Activated naive CD4-positive, alpha-beta T cell treated with anti-CD3 and anti-CD28 coated beads for 36 hours (primary cell): ENCODE measurements at regions of chr7 and their contacts with region 1.

Region 1: DNA sequence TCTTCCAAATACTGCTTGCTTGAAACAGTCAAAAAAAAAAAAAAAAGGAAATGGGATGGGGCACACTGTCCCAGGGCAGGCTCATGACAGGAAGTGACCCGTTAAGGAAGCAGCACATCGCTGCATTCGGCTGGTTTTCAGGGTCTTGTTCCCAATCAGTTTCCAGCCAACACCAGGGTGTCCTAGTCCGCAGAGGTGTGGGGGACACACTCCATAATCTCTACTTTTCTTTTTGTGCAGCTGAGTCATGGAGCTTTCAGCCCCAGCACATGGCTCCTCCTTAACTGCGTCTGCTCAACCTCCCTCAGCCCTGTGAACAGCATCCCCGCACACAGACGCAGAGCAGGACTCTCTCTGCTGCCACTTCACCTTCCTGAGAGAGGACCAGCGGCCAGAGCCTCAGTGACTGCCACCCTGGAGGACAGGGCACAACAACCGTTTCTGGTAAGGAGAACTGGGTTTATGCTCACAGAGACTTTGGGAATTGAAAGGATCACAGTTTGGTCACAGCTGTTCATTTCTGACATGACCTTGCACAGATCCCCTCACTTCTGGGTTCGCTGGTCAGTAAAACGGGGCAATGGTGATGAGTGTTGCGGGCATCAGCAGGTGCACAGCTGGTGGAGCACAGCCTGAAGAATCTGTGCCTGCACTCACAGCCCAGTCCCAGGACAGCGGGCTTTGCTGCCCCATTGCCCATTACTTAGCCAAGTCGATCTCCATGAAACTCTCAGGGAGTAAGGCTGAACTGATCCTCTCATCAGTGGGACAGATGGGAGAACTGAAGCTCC is at the start of gene GIMAP5:
- DNase-seq: peak; percentile 66
- H3K4me3 Mint-ChIP-seq: peak within 1 kb of the TSS; percentile 88
- H3K27ac Mint-ChIP-seq: peak within 1 kb of the TSS; percentile 95
- H3K4me1 Mint-ChIP-seq: peaks cover 72% of the 10 kb centered on the region
- H3K27me3 Mint-ChIP-seq: no peaks in the 10 kb centered on the region
- total RNA-seq, gene GIMAP5: 32.1 to 32.3 TPM

Region 2: GRCh38 chr7:150631866-150632864 is 105.3 kb before region 1 on chr7 and contains the start of gene GIMAP6:
- CTCF ChIA-PET with region 1: interaction called, 4 read pairs
- intact Hi-C with region 1: loop called (anchors 1 kb)
- DNase-seq: peak; percentile 64
- H3K4me3 Mint-ChIP-seq: peak within 1 kb of the TSS; percentile 85
- H3K27ac Mint-ChIP-seq: peak within 1 kb of the TSS; percentile 92
- H3K4me1 Mint-ChIP-seq: peaks cover 67% of the 10 kb centered on the region
- H3K27me3 Mint-ChIP-seq: no peaks in the 10 kb centered on the region
- total RNA-seq, gene GIMAP6: 19.2 to 20.7 TPM

Region 3: DNA sequence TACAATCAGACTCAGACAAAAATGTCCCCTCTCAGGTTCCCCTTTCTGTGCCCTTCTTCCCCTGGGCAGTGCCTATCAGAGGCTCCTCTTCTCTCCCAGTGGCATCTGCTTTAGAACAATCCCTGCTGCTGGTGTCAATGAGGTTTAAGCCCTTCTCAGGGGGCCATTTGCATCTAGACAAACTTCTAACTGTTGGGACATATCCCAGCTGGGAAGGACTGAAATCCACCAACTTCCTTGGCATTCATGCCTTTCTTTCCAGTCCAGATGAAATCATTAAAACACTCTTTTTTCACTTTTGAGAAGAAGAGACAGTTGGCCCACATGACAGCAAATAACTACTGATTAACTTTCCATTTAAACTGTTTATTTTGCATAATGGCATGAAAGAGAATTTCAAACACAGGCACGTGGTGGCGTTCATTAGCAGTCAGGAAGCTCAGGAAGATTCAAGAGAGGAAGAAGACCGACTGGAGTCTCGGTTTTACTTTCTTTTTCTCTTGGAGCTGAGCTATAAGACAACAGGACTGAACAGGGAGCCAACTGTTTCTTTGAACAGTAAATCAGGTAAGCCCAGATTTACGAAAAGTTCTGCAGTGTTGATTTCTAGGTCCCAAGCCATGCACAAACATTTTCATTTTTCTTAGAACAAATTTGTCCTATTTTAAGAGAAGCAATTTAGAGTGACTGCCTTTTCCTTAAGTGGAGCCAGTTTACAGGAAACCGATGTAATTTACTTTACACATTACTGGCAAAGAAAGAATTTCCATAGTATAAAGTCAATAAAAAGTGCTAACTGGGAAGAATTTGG is 52.0 kb before region 1 on chr7 and contains the start of gene GIMAP2:
- CTCF ChIA-PET with region 1: interaction called, 3 read pairs
- intact Hi-C with region 1: loop called (anchors 2 kb)
- DNase-seq: peak; percentile 56
- H3K4me3 Mint-ChIP-seq: peak within 1 kb of the TSS; percentile 93
- H3K27ac Mint-ChIP-seq: peak within 1 kb of the TSS; percentile 98
- H3K4me1 Mint-ChIP-seq: peaks cover 73% of the 10 kb centered on the region
- H3K27me3 Mint-ChIP-seq: no peaks in the 10 kb centered on the region
- total RNA-seq, gene GIMAP2: 45.0 to 49.5 TPM